Natural killer cell (primary cell): ENCODE measurements at regions of chr2 and their contacts with region 1.

Region 1: DNA sequence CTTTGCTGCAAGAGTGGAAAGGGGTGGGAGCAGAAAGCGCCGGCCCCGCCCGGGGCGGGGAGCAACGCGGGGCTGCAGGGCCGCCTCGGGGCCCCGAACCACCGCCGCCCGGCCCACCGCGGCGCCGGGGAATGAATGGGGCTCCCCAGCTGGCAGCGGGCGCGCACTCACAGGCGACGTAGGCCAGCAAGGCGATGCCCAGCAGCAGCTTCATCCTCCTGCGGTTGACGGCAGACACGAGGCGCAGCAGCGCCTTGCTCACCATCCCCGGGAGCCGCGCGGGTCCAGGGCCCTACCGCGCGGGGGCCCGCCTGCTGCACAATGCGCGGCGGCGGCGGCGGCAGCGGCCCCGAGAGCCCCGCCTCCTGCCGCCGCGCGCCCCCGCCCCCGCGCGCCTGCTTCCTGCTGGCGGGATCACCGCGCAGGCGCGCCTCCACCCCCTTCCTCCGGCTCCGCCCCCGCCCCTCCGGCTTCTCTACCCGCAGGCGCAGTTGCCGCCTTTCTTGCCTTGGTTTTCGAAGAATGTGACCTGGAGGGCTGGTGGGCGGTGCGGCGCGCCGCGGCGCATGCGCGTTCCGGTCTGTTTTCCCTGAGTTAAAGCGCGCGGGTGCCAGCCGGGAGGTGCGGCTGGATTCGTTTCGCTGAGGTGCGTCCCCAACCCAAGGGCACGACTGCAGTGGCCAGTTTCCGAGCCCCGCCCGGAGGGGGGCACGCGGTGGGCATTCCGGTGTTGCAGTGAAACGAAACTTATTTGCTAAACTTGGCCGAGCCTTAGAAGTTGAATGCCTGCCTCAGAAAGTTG is at the start of gene UXS1:
- DNase-seq: peak; percentile 98 to 99
- ATAC-seq: peak; percentile 76 to 91 (median 83)
- H3K4me3 ChIP-seq: peak within 1 kb of the TSS; percentile 89
- H3K4me3 Mint-ChIP-seq: peak within 1 kb of the TSS; percentile 98
- H3K27ac ChIP-seq: peak within 1 kb of the TSS; percentile 68
- H3K27ac Mint-ChIP-seq: peak within 1 kb of the TSS; percentile 90 to 94
- H3K4me1 ChIP-seq: peaks cover 25% of the 10 kb centered on the region
- H3K4me1 Mint-ChIP-seq: peaks cover 39 to 42% of the 10 kb centered on the region in 2 donors
- H3K27me3 ChIP-seq: no peaks in the 10 kb centered on the region
- H3K27me3 Mint-ChIP-seq: peaks cover 0 to 2% of the 10 kb centered on the region in 2 donors
- CTCF ChIP-seq: no peak
- total RNA-seq, gene UXS1: 36.3 to 60.4 (median 37.5) TPM

Region 2: GRCh38 chr2:105571445-105571987 is 622.7 kb before region 1 on chr2:
- intact Hi-C with region 1: no loop called
- DNase-seq: no peak
- ATAC-seq: no peak
- H3K4me3 ChIP-seq: no peak overlapping the region
- H3K4me3 Mint-ChIP-seq: no peak overlapping the region
- H3K27ac ChIP-seq: no peak overlapping the region
- H3K27ac Mint-ChIP-seq: peak overlapping the region in 1 of 2 donors; percentile 23
- H3K4me1 ChIP-seq: peaks cover 3% of the 10 kb centered on the region
- H3K4me1 Mint-ChIP-seq: peaks cover 0 to 13% of the 10 kb centered on the region in 2 donors
- H3K27me3 ChIP-seq: no peaks in the 10 kb centered on the region
- H3K27me3 Mint-ChIP-seq: peaks cover 20 to 22% of the 10 kb centered on the region in 2 donors
- CTCF ChIP-seq: no peak

Region 3: DNA sequence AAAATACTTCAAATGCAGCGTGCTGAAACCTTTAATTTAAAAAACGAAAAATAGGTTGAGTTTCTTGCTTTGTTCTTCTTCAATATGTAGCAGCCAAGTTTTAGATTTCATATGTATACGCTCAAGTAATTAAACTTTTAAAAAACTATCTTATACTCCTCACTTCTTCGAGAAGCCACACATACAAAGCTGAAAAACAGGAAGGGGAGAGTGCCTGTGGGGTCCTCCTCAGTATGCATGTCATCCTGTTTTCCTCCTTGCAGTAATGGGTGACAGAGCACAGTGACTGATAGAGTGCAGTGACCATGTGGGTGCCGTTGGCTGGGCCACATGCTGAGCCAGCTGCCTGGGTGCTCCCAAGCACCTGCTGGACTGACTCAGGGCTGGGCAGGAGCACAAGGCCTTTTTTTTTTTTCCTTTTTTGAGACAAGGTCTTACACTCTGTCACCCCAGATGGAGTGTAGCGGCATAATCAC is 33.4 kb before region 1 on chr2:
- intact Hi-C with region 1: loop called (anchors 1 kb)
- DNase-seq: peak in 1 of 2 donors; percentile 69
- ATAC-seq: peak; percentile 50 to 66 (median 52)
- H3K4me3 ChIP-seq: peak overlapping the region; percentile 56
- H3K4me3 Mint-ChIP-seq: peak overlapping the region; percentile 90
- H3K27ac ChIP-seq: peak overlapping the region; percentile 94
- H3K27ac Mint-ChIP-seq: peak overlapping the region; percentile 92 to 94
- H3K4me1 ChIP-seq: peaks cover 35% of the 10 kb centered on the region
- H3K4me1 Mint-ChIP-seq: peaks cover 42 to 46% of the 10 kb centered on the region in 2 donors
- H3K27me3 ChIP-seq: no peaks in the 10 kb centered on the region
- H3K27me3 Mint-ChIP-seq: no peaks in the 10 kb centered on the region
- CTCF ChIP-seq: no peak